ENCODE measurements at regions of chr12 and their contacts with region 1.

Region 1: GRCh38 chr12:45388545-45388944 is 172.7 kb downstream of the ANO6 start:
- DNase-seq: no peak
- ATAC-seq: peak; percentile 65
- H3K4me3 ChIP-seq: no peak overlapping the region
- H3K27ac ChIP-seq: no peak overlapping the region
- H3K4me1 ChIP-seq: peaks cover 0 to 2% of the 10 kb centered on the region in 2 donors
- H3K27me3 ChIP-seq: no peaks in the 10 kb centered on the region

Region 2: GRCh38 chr12:45183246-45183645 is 205.3 kb before region 1 on chr12:
- intact Hi-C with region 1: loop called in 1 of 2 experiments (anchors 5 kb)
- DNase-seq: no peak
- ATAC-seq: no peak
- H3K4me3 ChIP-seq: no peak overlapping the region
- H3K27ac ChIP-seq: no peak overlapping the region
- H3K4me1 ChIP-seq: no peaks in the 10 kb centered on the region
- H3K27me3 ChIP-seq: no peaks in the 10 kb centered on the region

Region 3: DNA sequence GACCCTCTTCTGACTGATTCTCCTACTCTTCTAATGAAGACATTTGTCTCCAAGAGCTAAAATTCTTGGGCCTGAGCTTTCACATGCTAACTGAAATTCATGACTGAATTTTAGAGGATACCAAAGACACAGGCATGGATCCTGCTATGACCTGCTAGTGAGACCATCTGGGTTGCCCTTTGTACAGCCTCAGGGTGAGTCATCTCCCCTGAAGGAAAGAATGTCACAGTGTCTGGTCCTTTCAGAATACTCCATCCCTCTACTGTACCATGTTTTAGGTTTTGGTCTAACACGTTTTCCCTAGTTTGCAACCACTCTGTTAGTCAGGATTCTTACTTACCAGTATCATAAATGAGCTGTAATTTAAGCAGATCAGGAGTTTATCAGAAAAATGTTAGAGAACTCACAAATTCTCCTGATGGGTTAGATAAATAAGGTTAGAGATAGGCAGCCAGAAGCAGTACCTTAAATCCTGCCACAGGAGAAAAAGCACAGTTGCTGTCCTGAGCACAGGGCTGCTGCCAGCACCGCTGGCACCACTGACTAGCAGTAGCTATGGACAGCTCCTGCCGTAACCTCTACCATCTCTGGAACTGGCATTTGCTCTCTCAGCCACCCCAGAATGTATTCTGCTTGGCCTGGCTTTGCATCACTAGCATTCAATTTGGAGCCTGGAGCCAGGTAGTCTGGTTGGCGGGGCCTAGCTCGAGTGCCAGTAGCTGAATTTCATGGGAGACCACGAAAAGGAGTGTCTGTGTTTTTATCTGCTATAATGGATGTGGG is 45.1 kb before region 1 on chr12:
- intact Hi-C with region 1: no loop called
- DNase-seq: no peak
- ATAC-seq: no peak
- H3K4me3 ChIP-seq: no peak overlapping the region
- H3K27ac ChIP-seq: no peak overlapping the region
- H3K4me1 ChIP-seq: peaks cover 6 to 14% of the 10 kb centered on the region in 2 donors
- H3K27me3 ChIP-seq: no peaks in the 10 kb centered on the region

Region 4: GRCh38 chr12:45435945-45436710 is 47.6 kb after region 1 on chr12:
- intact Hi-C with region 1: no loop called
- DNase-seq: no peak
- ATAC-seq: no peak
- H3K4me3 ChIP-seq: no peak overlapping the region
- H3K27ac ChIP-seq: peak overlapping the region in 1 of 2 donors; percentile 18
- H3K4me1 ChIP-seq: peaks cover 0 to 4% of the 10 kb centered on the region in 2 donors
- H3K27me3 ChIP-seq: no peaks in the 10 kb centered on the region

Measured in aorta (tissue), 5 donors.